ENCODE measurements at regions of chr3 and their contacts with region 1.

Region 1: GRCh38 chr3:184135149-184135910 is at the start of gene EIF2B5:
- DNase-seq: peak; percentile 97
- H3K4me3 ChIP-seq: peak within 1 kb of the TSS; percentile 87 to 97 (median 92)
- H3K27ac ChIP-seq: peak within 1 kb of the TSS; percentile 85 to 91 (median 88)
- H3K4me1 ChIP-seq: peaks cover 14 to 35% (median 23%) of the 10 kb centered on the region in 4 donors
- H3K27me3 ChIP-seq: no peaks in the 10 kb centered on the region
- CTCF ChIP-seq: peak; percentile 38 to 63 (median 60)
- EP300 ChIP-seq: no peak
- POLR2A ChIP-seq: peak; percentile 30
- total RNA-seq, gene EIF2B5: 29.3 to 39.5 (median 33.8) TPM

Region 2: DNA sequence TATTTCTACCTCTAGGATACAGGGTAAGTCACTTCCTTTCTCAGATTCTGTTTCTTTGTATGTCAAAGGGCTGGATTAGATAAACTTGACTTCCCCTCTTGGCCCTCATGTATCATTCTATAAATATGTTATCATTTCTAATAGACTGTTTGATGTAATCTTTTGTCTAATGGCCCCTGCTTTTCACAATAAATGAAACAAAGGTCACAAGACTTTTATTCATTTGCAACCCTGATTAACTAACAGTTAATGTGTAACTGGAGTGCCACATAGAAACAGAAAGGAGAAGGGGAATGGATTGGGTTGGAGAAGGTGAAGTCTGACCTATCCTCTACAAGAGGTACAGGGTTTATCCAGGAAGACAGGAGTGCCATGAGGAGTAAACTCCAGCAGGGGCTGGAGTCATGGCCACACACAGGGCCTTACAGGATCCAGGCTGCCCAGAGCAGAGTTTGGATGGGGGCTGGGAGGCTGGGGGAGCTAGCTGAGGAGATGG is 890.3 kb before region 1 on chr3:
- intact Hi-C with region 1: no loop called
- DNase-seq: no peak
- H3K4me3 ChIP-seq: no peak overlapping the region
- H3K27ac ChIP-seq: no peak overlapping the region
- H3K4me1 ChIP-seq: no peaks in the 10 kb centered on the region
- H3K27me3 ChIP-seq: no peaks in the 10 kb centered on the region
- CTCF ChIP-seq: no peak
- EP300 ChIP-seq: no peak
- POLR2A ChIP-seq: no peak

Region 3: GRCh38 chr3:183895296-183895695 is 240.0 kb before region 1 on chr3:
- intact Hi-C with region 1: loop called (anchors 5 kb)
- DNase-seq: no peak
- H3K4me3 ChIP-seq: no peak overlapping the region
- H3K27ac ChIP-seq: no peak overlapping the region
- H3K4me1 ChIP-seq: peaks cover 0 to 4% (median 4%) of the 10 kb centered on the region in 4 donors
- H3K27me3 ChIP-seq: peaks cover 0 to 45% (median 0%) of the 10 kb centered on the region in 4 donors
- CTCF ChIP-seq: peak; percentile 74 to 82 (median 77)
- EP300 ChIP-seq: no peak
- POLR2A ChIP-seq: no peak

Region 4: DNA sequence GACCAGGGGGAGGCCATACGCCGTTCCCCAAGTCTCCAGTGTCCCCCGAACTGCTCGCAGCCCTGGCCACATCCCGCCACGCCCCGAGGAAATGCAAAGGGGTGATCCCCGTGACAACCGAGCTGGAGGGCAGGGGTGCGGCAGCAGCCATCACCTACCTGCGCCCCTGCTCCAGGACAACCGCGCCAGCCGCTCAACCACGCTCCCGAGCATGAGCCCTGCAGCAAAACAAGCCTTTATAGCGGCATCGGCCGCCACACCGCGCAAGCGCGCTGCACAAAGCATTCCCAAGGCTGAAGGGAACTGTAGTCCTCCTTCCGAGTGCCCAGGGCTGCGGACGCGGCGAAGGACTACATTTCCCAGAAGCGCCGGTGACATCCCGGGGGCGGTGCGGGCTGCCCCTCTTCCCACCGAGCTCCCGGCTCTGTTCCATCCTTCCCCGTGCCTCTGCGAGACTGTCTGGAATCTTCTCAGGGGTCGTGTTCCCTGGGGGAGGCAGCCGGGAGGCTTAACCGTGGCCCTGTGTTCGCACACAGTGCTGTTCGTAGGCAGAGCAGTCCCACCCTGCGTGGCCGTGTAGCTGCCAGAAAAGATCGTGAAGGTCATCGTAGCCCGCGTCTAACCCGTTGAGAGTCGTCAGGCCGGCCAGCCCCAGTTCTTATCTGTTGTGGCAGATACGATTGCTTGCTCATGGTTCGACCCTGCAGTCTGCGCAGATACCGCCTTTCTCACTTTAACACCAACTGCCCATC is 117.5 kb before region 1 on chr3 and contains the start of gene ABCC5:
- intact Hi-C with region 1: loop called (anchors 2 kb)
- DNase-seq: peak; percentile 97
- H3K4me3 ChIP-seq: peak within 1 kb of the TSS; percentile 87 to 99 (median 93)
- H3K27ac ChIP-seq: peak within 1 kb of the TSS; percentile 80 to 84 (median 84)
- H3K4me1 ChIP-seq: peaks cover 3 to 25% (median 21%) of the 10 kb centered on the region in 4 donors
- H3K27me3 ChIP-seq: no peaks in the 10 kb centered on the region
- CTCF ChIP-seq: peak in 2 of 3 experiments; percentile 24 to 55
- EP300 ChIP-seq: no peak
- POLR2A ChIP-seq: no peak
- total RNA-seq, gene ABCC5: 9.8 to 20.2 (median 17.6) TPM

Region 5: DNA sequence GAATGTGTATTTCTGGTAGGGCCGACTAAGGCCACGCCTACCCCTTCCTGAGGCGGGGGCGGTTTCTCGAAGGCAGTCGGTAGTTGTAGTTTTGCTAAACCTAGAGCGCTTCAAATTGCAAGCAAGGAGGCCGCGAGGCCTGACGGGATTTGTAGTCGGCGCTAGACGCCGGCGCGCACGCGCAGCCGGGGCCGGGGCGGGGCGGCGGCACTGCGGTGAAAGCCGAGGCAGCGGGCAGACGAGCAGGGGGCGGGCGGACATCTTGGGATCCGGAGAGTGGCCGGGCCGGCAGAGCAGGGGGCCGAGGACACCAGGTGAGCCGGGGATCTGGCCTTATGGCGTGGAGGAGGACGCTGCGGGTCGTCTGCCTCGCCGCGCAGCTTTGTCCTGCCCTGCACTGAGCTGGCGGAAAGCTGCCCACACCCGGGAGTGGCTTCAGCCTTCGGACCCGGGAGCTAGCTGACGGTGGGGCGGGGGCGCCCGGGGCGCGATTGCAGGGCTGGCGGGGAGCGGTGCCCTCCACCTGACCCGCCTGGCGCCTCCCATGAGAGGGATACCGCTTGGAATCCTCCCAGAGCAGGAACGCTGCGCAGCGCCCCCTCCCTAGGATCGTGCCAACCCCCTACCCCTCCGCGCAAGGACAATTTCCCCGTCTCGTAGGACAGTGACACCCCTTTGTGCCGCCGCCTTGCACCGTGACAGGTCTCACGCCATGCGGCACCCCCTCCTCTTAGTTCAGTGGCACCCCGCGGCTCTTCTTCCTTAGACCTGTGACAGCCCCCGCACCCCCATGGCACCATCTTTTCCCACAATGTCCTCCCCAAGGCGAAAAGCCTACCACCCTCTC is 39.5 kb after region 1 on chr3 and contains the start of gene AP2M1:
- intact Hi-C with region 1: loop called (anchors 2 kb)
- DNase-seq: peak; percentile 99
- H3K4me3 ChIP-seq: peak within 1 kb of the TSS; percentile 85 to 100 (median 99)
- H3K27ac ChIP-seq: peak within 1 kb of the TSS; percentile 90 to 97 (median 96)
- H3K4me1 ChIP-seq: peaks cover 33 to 57% (median 53%) of the 10 kb centered on the region in 4 donors
- H3K27me3 ChIP-seq: no peaks in the 10 kb centered on the region
- CTCF ChIP-seq: no peak
- EP300 ChIP-seq: no peak
- POLR2A ChIP-seq: peak; percentile 75
- total RNA-seq, gene AP2M1: 258 to 397 (median 298) TPM

Region 6: GRCh38 chr3:184250167-184250828 is 115.0 kb after region 1 on chr3:
- intact Hi-C with region 1: loop called (anchors 5 kb)
- DNase-seq: peak; percentile 96
- H3K4me3 ChIP-seq: peak overlapping the region; percentile 77 to 93 (median 86)
- H3K27ac ChIP-seq: peak overlapping the region; percentile 74 to 84 (median 81)
- H3K4me1 ChIP-seq: peaks cover 14 to 35% (median 23%) of the 10 kb centered on the region in 4 donors
- H3K27me3 ChIP-seq: no peaks in the 10 kb centered on the region
- CTCF ChIP-seq: peak; percentile 87 to 98 (median 91)
- EP300 ChIP-seq: no peak
- POLR2A ChIP-seq: no peak

Region 7: DNA sequence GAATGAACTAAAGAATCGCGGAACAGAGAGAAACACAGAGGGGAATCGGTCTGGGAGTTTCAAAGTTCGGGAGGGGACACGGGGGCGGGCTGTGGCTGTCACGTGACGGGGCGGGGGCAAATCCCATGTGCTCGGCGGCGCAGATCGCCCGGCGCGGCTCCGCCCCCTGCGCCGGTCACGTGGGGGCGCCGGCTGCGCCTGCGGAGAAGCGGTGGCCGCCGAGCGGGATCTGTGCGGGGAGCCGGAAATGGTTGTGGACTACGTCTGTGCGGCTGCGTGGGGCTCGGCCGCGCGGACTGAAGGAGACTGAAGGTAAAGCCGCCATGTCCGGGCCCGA is 179.0 kb after region 1 on chr3 and contains the start of gene EIF4G1:
- intact Hi-C with region 1: no loop called
- DNase-seq: peak; percentile 99
- H3K4me3 ChIP-seq: peak within 1 kb of the TSS; percentile 81 to 91 (median 88)
- H3K27ac ChIP-seq: peak within 1 kb of the TSS; percentile 97 to 100 (median 98)
- H3K4me1 ChIP-seq: peaks cover 39 to 46% (median 44%) of the 10 kb centered on the region in 4 donors
- H3K27me3 ChIP-seq: no peaks in the 10 kb centered on the region
- CTCF ChIP-seq: no peak
- EP300 ChIP-seq: no peak
- POLR2A ChIP-seq: no peak
- total RNA-seq, gene EIF4G1: 291 to 418 (median 360) TPM